IMR-90 (cell line): ENCODE measurements at regions of chr15 and their contacts with region 1.

Region 1: GRCh38 chr15:84929744-84930371 is 45.4 kb downstream of the SLC28A1 start:
- DNase-seq: peak; percentile 72
- ATAC-seq: no peak
- H3K4me3 ChIP-seq: no peak overlapping the region
- H3K27ac ChIP-seq: no peak overlapping the region
- H3K4me1 ChIP-seq: peaks cover 2% of the 10 kb centered on the region
- H3K27me3 ChIP-seq: no peaks in the 10 kb centered on the region
- CTCF ChIP-seq: no peak
- POLR2A ChIP-seq: no peak
- RAD21 ChIP-seq: no peak

Region 2: DNA sequence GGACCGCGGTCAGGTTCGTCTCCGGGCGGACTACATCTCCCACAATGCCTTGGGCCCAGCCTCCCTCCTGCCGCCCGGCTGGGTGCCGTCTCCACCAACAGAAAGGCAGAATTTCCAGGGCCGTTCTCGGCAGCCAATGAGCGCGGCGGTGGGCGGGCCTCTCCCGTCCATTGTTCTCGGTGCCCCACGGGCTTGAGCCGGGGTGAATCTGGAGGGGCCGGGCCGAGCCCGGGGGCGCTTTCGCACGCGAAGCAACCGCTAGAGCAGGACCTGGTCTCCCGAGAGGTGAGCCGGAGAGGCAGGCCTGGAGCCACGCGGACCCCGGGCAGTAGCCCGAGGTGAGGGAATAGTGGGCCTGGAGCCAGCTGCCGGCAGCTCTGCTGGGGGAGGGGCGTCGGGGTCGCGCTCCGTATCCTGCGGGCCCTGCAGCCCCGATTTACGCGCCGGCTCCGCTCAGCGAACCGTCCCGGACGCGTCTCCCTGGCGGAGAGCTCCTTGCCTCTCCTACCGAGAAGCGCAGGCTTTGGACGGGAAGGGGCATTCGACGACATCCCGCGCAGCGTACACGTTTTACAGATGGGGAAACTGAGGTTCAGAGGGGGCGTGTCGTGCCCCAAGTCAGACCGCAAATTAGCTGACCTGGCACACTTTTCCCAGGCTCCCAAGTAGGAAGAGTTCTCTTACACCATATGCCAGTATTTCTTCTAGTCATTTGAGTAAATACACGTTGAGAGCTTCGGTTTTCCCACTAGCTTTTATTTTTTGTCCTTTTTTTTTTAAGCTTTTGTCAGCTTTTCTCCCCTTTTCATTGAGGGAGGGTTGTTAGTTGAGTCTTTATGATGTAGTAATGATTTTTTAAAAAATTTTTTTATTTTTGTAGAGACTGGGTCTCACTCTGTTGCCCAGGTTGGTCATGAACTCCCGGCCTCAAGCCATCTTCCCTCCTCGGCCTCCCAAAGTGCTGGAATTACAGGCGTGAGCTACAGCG is 328.7 kb before region 1 on chr15 and contains the start of gene ZSCAN2:
- CTCF ChIA-PET with region 1: interaction called, 10 read pairs
- POLR2A ChIA-PET with region 1: no interaction called
- dilution Hi-C with region 1: no loop called
- in situ Hi-C with region 1: no loop called
- intact Hi-C with region 1: loop called (anchors 1 kb)
- DNase-seq: peak; percentile 91
- ATAC-seq: peak; percentile 98
- H3K4me3 ChIP-seq: peak within 1 kb of the TSS; percentile 65
- H3K27ac ChIP-seq: peak within 1 kb of the TSS; percentile 70
- H3K4me1 ChIP-seq: peaks cover 4% of the 10 kb centered on the region
- H3K27me3 ChIP-seq: no peaks in the 10 kb centered on the region
- CTCF ChIP-seq: no peak
- POLR2A ChIP-seq: no peak
- RAD21 ChIP-seq: no peak
- total RNA-seq, gene ZSCAN2: 15.0 and 18.3 TPM in 2 replicates

Region 3: DNA sequence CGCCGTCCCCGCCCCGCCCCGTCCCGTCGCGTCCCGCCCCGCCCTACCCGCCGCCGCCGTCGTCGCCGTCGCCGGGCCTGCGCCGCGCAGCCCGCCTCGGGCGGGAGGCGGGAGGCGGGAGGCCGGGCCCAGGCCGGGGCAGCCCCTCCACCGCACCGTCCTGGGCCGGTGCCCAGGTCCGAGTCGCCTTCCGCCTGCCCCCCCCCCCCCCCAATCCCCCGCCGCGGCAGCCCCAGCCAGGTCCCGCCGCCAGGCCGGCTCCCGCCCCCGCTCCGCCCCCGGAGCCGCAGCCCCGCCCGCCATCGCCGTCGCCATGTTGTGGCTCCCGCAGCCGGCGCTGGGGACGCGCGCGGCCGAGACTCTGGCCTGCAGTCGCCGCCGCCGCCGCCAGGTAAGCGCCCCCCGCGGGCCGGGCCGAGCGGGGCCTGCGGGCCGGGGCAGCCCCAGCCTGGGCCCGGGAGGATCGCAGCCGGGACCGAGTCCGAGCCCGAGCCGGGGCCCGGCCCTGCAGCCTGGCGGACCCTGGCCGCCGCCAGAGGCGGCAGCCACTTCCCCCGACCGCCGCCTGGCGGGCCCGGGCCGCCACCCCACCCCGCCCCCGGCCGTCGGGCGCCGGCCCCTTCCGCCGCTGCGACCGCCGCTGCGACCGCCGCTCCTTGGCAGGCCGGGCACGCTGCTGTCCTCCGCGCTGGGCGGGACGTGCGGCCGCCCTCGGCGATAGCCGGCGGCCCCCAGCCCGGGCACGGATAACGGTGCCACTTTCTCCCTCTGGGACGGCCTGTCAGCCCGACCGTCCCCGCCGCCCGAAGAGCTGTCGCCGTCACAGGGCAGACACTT is 181.4 kb before region 1 on chr15 and contains the start of gene ZNF592:
- CTCF ChIA-PET with region 1: no interaction called
- POLR2A ChIA-PET with region 1: no interaction called
- dilution Hi-C with region 1: no loop called
- in situ Hi-C with region 1: no loop called
- intact Hi-C with region 1: loop called (anchors 10 kb)
- DNase-seq: peak; percentile 70
- ATAC-seq: peak; percentile 85
- H3K4me3 ChIP-seq: peak within 1 kb of the TSS; percentile 99
- H3K27ac ChIP-seq: peak within 1 kb of the TSS; percentile 92
- H3K4me1 ChIP-seq: peaks cover 12% of the 10 kb centered on the region
- H3K27me3 ChIP-seq: no peaks in the 10 kb centered on the region
- CTCF ChIP-seq: peak; percentile 33
- POLR2A ChIP-seq: no peak
- RAD21 ChIP-seq: peak; percentile 22; the same call in 1 of the 2 replicates
- total RNA-seq, gene ZNF592: 4.2 and 4.3 TPM in 2 replicates

Region 4: DNA sequence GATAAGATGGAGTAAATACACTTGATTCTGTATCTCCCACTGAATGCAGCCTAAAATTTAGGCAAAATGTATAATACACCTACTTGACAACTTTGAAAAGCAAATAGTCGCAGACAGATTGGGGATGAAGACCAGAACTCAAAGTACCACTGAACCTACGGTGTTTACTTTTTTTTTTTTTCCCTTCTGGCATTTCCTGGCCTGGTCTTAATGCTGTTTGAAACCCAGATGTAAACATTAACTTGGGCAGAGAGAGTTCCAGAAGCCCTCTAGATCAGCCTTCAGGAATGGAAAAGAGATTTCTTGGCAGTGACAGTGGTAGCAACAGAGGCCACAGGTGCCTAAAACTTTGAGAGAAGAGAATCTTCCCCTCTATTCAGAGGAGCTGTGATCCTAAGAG is 84.9 kb before region 1 on chr15:
- CTCF ChIA-PET with region 1: interaction called, 3 read pairs
- POLR2A ChIA-PET with region 1: no interaction called
- dilution Hi-C with region 1: no loop called
- in situ Hi-C with region 1: no loop called
- intact Hi-C with region 1: loop called (anchors 1 kb)
- DNase-seq: no peak
- ATAC-seq: peak; percentile 53
- H3K4me3 ChIP-seq: no peak overlapping the region
- H3K27ac ChIP-seq: no peak overlapping the region
- H3K4me1 ChIP-seq: peaks cover 1% of the 10 kb centered on the region; the same call in 1 of the 2 replicates
- H3K27me3 ChIP-seq: peaks cover 2% of the 10 kb centered on the region; the same call in 1 of the 2 replicates
- CTCF ChIP-seq: no peak
- POLR2A ChIP-seq: no peak
- RAD21 ChIP-seq: no peak

Region 5: GRCh38 chr15:84961114-84961452 is 31.2 kb after region 1 on chr15:
- CTCF ChIA-PET with region 1: no interaction called
- POLR2A ChIA-PET with region 1: no interaction called
- dilution Hi-C with region 1: no loop called
- in situ Hi-C with region 1: no loop called
- intact Hi-C with region 1: no loop called
- DNase-seq: peak; percentile 91
- ATAC-seq: peak; percentile 92
- H3K4me3 ChIP-seq: no peak overlapping the region
- H3K27ac ChIP-seq: 0 out of 2 replicates have a peak overlapping the region, but pooled peaks have one; percentile 4
- H3K4me1 ChIP-seq: peaks cover 6% of the 10 kb centered on the region
- H3K27me3 ChIP-seq: no peaks in the 10 kb centered on the region
- CTCF ChIP-seq: no peak
- POLR2A ChIP-seq: no peak
- RAD21 ChIP-seq: peak; percentile 22; the same call in 1 of the 2 replicates

Region 6: GRCh38 chr15:84981054-84981710 is 51.3 kb after region 1 on chr15:
- CTCF ChIA-PET with region 1: no interaction called
- POLR2A ChIA-PET with region 1: no interaction called
- dilution Hi-C with region 1: no loop called
- in situ Hi-C with region 1: no loop called
- intact Hi-C with region 1: no loop called
- DNase-seq: peak; percentile 96
- ATAC-seq: peak; percentile 82
- H3K4me3 ChIP-seq: peak overlapping the region; percentile 88
- H3K27ac ChIP-seq: peak overlapping the region; percentile 82
- H3K4me1 ChIP-seq: peaks cover 5% of the 10 kb centered on the region
- H3K27me3 ChIP-seq: no peaks in the 10 kb centered on the region
- CTCF ChIP-seq: 0 out of 2 replicates have a peak, but pooled peaks have one; percentile 14
- POLR2A ChIP-seq: no peak
- RAD21 ChIP-seq: 0 out of 2 replicates have a peak, but pooled peaks have one; percentile 18

Region 7: DNA sequence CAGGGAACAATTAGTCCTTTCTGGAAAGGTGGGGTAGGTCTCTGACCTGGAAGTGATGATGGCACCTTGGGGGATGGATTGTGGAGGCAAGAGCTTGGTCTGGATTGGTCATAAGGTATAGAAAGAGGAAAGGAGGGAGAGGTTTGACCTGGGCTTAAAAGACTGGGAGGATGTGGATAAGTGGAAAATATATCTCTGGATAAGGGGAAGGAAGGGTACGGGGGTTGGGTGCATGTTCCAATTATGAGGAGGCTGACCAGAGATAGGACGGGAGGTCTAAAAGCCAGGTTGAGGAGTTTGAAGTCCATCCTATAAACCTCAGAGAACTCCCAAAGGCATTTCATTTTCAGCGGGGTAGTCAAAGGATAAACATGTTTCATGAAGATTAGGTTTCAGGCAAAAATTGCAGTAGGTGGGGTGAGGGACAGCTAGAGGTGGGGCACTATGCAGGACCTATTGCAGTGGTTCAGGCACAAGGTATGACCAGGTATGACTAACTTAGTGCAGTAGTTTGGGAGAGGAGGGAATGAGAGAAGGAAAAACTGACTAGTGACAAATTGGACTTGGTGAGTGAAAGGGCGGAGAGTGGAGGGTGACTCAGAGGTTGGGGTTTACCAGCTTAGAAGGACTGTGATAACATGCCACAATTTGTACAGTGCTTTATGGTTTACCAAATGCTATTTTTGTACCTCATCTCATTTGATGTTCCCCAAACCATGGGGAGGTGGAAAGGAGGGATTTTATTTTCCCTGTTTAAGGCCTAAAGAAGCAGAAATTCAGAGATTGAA is 62.5 kb after region 1 on chr15:
- CTCF ChIA-PET with region 1: no interaction called
- POLR2A ChIA-PET with region 1: no interaction called
- dilution Hi-C with region 1: no loop called
- in situ Hi-C with region 1: no loop called
- intact Hi-C with region 1: no loop called
- DNase-seq: peak; percentile 87
- ATAC-seq: peak; percentile 94
- H3K4me3 ChIP-seq: no peak overlapping the region
- H3K27ac ChIP-seq: no peak overlapping the region
- H3K4me1 ChIP-seq: peaks cover 5% of the 10 kb centered on the region
- H3K27me3 ChIP-seq: no peaks in the 10 kb centered on the region
- CTCF ChIP-seq: no peak
- POLR2A ChIP-seq: no peak
- RAD21 ChIP-seq: no peak